ENCODE measurements at regions of chr14 and their contacts with region 1.

Region 1: DNA sequence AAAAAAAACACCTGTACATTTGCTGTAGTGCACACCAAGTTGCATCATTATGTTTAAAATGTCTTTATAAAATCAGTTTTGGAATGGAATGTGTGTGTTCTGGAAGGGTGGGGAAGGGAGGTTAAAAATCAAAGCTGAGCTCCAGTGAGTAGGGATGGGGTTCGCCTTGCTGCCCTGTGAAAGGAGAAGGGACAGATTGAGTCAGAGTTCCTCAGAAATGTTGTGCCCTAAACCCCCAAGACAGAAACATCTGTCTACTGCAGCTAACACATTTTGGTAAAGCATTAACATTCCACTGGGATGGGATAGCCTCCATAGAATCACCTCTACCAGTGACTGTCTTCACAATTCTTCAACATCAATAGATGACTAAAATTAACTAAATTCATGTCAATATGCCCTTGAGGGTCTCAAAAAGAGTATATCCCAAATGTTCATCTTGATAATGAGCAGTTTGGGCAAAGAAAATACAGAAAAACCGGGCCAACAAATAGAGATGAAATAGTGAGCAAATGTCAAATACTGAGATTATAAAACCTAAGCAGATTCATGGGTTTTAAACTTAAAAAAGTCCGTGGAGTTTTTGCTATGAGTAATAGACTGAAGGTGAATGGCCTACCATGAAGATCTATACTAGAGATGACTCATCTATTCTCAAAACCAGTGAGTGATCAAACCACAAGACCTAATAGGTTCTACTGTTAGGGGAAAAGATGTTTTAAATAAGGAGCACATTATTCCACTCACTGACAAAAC is 5.4 kb downstream of the HNRNPC start:
- DNase-seq: peak; percentile 57
- CTCF ChIP-seq: no peak

Region 2: DNA sequence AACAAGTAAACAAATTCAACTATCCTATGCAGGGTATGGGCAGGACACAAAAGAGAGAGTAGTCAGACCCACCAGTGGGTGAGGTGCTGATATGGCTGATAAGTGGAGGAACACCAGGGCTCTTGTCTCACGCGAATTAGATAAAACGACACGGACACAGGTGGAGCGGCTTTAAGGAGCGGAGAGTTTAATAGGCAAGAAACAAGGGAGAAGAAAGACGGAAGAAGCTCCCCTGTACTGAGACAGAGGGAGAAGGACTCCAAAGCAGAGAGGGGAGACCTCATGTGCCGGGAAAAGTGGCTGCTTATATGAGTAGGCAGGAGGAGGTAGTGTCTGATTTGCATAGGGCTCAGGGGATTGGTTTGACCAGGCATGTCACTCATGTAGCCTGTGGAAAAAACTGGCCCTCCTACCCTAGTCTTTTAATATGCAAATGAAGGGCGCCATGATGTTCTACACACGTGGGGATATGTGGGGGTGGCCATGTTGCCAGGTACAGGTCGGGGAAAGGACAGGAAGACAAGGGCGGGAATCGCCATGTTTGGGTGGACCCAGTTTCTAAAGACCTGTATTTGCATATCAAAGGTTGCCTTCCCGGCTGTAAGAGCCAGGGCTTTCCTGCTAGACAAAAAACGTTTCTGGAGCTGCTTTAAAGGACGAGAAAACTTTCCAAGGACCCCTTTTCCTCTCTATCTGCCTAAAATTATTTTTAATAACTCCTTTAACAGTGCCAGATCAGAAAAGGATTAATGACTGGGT is 44.8 kb after region 1 on chr14:
- CTCF ChIA-PET with region 1: interaction called, 5 read pairs
- POLR2A ChIA-PET with region 1: interaction called, 19 read pairs
- DNase-seq: peak; percentile 66
- CTCF ChIP-seq: no peak

Region 3: GRCh38 chr14:21395444-21395843 is 131.6 kb after region 1 on chr14:
- CTCF ChIA-PET with region 1: no interaction called
- POLR2A ChIA-PET with region 1: no interaction called
- DNase-seq: no peak
- CTCF ChIP-seq: no peak